GM23248 (cell line): ENCODE measurements at regions of chr3 and their contacts with region 1.

Region 1: GRCh38 chr3:157626789-157627188 is 123.6 kb upstream of the VEPH1 start:
- DNase-seq: no peak
- H3K4me3 ChIP-seq: no peak overlapping the region
- H3K27ac ChIP-seq: no peak overlapping the region
- H3K4me1 ChIP-seq: no peaks in the 10 kb centered on the region
- H3K27me3 ChIP-seq: no peaks in the 10 kb centered on the region

Region 2: DNA sequence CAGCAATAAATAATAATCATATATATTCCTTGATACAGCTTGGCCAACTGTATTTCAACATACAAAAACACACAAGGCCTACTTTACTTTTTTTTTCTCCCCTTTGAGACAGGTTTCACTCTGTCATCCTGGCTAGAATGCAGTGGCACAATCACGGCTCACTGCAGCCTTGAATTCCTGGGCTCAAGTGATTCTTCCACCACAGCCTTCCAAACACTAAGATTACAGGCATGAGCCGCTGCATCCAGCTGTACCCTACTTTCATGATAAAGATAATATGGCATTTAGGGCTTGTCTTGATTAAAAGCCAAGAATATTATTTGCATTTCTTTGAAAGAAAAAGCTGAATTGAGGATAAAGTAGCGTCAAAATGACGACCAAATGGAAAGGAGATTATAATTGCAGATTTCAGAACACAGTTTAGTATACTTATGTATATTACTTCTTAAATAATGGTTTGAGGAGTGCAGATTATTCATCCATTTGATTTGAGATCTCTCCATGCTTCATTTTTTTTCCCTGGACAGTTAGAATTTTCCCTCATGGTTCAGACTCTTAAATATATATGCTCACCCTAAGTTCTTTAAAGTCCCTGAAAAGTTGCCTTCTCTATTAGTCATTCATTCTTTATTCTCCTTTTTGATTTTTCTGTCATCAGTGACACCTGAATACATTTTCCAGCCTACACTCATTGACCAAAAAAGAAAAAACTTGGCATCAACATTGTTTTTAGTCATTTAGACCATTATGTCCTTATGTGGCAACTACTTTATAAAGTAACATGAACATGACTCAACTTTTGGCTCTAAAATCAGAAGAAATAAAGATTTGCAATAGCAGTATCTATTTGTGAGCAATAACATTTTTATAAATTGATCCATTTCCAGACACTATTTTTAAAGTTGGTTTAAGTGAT is 895.7 kb after region 1 on chr3:
- in situ Hi-C with region 1: loop called (anchors 10 kb)
- DNase-seq: peak; percentile 87
- H3K4me3 ChIP-seq: no peak overlapping the region
- H3K27ac ChIP-seq: no peak overlapping the region
- H3K4me1 ChIP-seq: peaks cover 23% of the 10 kb centered on the region
- H3K27me3 ChIP-seq: no peaks in the 10 kb centered on the region